IMR-90 (cell line): ENCODE measurements at regions of chr4 and their contacts with region 1.

Region 1: DNA sequence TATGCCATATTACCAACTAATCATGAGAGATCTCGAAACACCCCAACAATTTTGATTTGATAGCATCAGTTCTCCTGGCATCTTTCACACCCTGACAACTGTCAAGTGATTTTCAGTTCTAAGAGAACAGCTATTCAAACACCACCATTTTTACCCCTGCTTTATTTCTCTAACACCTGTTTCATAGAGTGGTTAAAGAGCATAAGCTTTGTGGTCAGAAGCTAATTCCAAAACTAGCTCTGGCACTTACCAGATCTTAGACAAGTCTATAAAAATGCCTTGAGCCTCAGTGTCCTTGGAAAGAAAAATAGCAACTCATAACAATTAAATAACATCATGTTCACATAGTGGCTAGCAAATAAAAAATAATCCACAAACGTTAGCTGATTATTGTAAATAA is 17.9 kb downstream of the PPA2 start:
- DNase-seq: no peak
- ATAC-seq: no peak
- H3K4me3 ChIP-seq: no peak overlapping the region
- H3K27ac ChIP-seq: no peak overlapping the region
- H3K4me1 ChIP-seq: peaks cover 4% of the 10 kb centered on the region; the same call in 1 of the 2 replicates
- H3K27me3 ChIP-seq: no peaks in the 10 kb centered on the region
- CTCF ChIP-seq: no peak
- POLR2A ChIP-seq: no peak
- RAD21 ChIP-seq: no peak

Region 2: GRCh38 chr4:105179539-105180401 is 276.2 kb before region 1 on chr4:
- CTCF ChIA-PET with region 1: no interaction called
- POLR2A ChIA-PET with region 1: no interaction called
- dilution Hi-C with region 1: no loop called
- in situ Hi-C with region 1: no loop called
- intact Hi-C with region 1: no loop called
- DNase-seq: peak; percentile 32
- ATAC-seq: peak; percentile 49; the same call in 1 of the 2 replicates
- H3K4me3 ChIP-seq: no peak overlapping the region
- H3K27ac ChIP-seq: no peak overlapping the region
- H3K4me1 ChIP-seq: peaks cover 6% of the 10 kb centered on the region; the same call in 1 of the 2 replicates
- H3K27me3 ChIP-seq: no peaks in the 10 kb centered on the region
- CTCF ChIP-seq: no peak
- POLR2A ChIP-seq: no peak
- RAD21 ChIP-seq: no peak

Region 3: DNA sequence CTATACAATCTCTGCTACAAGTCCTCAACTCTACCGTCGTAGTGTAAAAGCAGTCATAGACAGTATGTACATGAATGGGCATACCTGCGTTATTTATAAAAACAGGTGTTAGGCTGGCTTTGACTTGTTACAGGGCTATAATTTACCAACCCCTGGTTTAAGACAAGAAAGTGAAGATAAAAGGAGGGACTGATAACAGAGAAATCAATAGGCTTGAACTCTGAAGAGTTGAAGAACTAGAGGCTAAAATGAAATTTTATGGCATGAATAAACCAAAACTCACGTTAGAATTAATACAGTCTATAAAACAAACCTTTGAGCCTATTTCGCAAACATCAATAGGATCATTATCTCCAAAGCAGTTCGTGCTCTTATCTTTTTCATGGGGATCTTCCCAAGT is 18.4 kb before region 1 on chr4:
- CTCF ChIA-PET with region 1: no interaction called
- POLR2A ChIA-PET with region 1: no interaction called
- dilution Hi-C with region 1: no loop called
- in situ Hi-C with region 1: no loop called
- intact Hi-C with region 1: loop called (anchors 2 kb)
- DNase-seq: no peak
- ATAC-seq: no peak
- H3K4me3 ChIP-seq: no peak overlapping the region
- H3K27ac ChIP-seq: no peak overlapping the region
- H3K4me1 ChIP-seq: no peaks in the 10 kb centered on the region
- H3K27me3 ChIP-seq: no peaks in the 10 kb centered on the region
- CTCF ChIP-seq: no peak
- POLR2A ChIP-seq: no peak
- RAD21 ChIP-seq: no peak